Activated T-helper 1 cell treated with anti-CD3 and anti-CD28 coated beads, Interleukin-12 subunit alpha, Interleukin-12 subunit beta, Interleukin-2, Interleukin-4 antibody, amounts not matched to agents 30 ng/mL and 10 ng/mL and 1 ng/mL, durations not matched to agents 14 hours and 24 hours and 36 hours (primary cell): ENCODE measurements at regions of chr11 and their contacts with region 1.

Region 1: GRCh38 chr11:57515332-57516060 is at the start of gene SLC43A1:
- DNase-seq: peak; percentile 9
- H3K4me3 Mint-ChIP-seq: peak within 1 kb of the TSS; percentile 99
- H3K27ac Mint-ChIP-seq: peak within 1 kb of the TSS; percentile 94
- H3K4me1 Mint-ChIP-seq: peaks cover 17% of the 10 kb centered on the region
- H3K27me3 Mint-ChIP-seq: peaks cover 4% of the 10 kb centered on the region
- total RNA-seq, gene SLC43A1: 29.1 and 30.3 TPM in 2 replicates

Region 2: DNA sequence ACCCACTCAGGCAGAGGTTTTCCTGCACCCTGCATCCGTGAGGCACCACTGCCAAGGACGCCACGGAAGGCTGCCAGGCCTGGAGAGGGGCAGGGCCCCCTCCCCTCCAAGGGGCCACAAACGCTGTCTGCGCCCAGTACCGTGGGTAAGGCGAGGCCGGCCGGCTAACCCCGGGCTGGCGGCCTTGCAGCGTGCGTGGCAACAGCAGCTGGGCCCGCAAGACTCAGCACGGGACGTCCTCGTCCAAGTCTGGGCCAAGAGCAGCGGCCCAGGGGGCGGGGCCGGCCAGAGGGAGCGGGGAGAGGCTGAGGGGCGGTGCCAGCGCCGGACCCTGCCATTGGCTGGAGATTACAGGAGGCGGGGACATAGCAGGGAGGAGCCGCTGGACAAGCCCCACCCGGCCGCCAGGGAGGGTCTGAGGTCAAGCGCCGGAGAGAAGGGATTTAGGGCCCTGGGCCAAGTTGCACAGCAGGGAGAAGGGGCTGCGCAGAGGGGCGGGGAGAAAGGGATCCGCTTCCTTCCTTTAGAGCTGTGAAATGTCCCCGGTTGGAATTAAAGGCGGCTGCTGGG is 16.0 kb before region 1 on chr11:
- intact Hi-C with region 1: loop called (anchors 1 kb)
- DNase-seq: peak; percentile 37
- H3K4me3 Mint-ChIP-seq: no peak overlapping the region
- H3K27ac Mint-ChIP-seq: no peak overlapping the region
- H3K4me1 Mint-ChIP-seq: peaks cover 8% of the 10 kb centered on the region
- H3K27me3 Mint-ChIP-seq: no peaks in the 10 kb centered on the region